Activated B cell treated with CpG ODN at 0.5 μM for 24 hours (primary cell): ENCODE measurements at regions of chr12 and their contacts with region 1.

Region 1: GRCh38 chr12:93467351-93468007 is at the start of gene MRPL42:
- DNase-seq: peak; percentile 93
- ATAC-seq: peak; percentile 92
- H3K4me3 Mint-ChIP-seq: peak within 1 kb of the TSS; percentile 95
- H3K27ac Mint-ChIP-seq: peak within 1 kb of the TSS; percentile 94
- H3K4me1 Mint-ChIP-seq: peaks cover 23% of the 10 kb centered on the region
- H3K27me3 Mint-ChIP-seq: no peaks in the 10 kb centered on the region
- CTCF ChIP-seq: no peak
- total RNA-seq, gene MRPL42: 40.9 and 44.6 TPM in 2 replicates

Region 2: DNA sequence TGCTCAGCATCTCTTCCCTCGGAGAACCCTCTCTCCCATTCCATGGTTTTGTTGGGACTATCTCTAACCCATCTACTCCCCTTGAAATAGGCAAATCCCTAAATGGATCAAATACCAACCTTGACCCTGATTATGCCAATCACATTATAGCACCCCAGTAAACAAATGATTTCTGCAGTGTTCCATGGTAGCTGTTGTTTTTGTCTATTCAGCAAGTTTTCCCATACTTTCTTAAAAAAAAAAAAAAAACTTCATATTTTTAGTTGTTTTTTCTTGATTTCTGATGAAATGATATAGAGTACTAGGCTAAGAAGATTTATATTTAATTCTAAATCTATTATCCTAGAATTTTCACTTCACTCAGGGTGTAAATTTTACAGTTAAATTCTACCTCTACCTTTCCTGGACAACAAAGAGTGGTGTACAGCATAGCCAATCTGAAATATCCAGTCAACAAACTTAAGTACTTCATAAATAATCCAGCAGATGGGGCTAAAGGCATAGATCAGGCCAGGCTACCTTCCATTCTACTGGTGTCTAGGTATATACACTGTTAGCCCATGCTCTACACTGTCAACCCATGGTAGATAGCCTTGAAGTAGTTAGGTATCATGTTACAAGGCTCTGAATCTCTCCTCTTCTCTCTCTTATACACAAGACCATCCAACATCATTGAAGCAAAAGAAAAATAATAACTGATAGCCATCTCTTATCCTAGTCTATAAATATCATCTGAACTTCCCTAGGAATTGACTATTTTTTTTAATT is 682.5 kb before region 1 on chr12:
- CTCF ChIA-PET with region 1: no interaction called
- POLR2A ChIA-PET with region 1: no interaction called
- intact Hi-C with region 1: loop called (anchors 1 kb)
- DNase-seq: no peak
- ATAC-seq: peak; percentile 98
- H3K4me3 Mint-ChIP-seq: no peak overlapping the region
- H3K27ac Mint-ChIP-seq: no peak overlapping the region
- H3K4me1 Mint-ChIP-seq: no peaks in the 10 kb centered on the region
- H3K27me3 Mint-ChIP-seq: no peaks in the 10 kb centered on the region
- CTCF ChIP-seq: no peak

Region 3: DNA sequence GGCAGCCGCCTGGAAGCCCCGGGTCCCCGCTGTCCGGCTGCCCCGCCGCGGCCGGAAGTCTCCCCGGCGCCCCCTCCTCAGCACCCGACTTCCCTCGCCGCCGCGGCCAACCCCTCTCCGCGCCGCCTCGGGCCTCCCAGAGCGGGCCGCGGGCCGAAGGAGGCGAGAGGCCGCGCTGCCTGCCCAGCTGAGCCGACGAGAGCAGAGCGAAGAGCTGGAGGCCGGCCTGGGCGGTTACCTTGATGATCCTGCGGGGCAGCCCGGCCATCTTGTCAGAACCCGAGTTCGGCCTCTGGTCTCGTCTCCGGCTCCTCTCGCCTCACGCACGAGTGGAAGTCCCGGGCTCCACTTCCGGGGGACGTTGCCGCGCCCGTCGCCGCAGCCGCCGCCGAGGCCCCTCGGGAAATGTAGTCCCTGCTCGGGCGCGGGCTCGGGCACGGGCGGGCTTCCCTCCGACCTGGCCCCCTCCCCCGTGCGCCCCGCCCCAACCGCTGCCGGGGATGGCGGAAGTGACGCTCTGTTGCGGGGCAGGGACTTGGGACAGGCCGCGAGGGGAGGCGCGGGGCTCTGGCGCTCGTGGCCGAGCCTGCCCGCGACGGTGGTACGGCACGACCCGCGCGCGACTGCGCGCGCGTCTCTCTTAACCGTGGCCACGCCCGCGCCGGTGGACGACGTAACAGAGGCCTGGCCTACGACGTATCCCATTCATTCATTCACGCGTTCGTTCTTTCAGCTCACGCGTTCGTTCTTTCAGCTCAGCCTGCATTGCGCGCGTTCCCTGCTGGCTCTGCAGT is 25.7 kb before region 1 on chr12 and contains the start of gene UBE2N:
- CTCF ChIA-PET with region 1: interaction called, 4 read pairs
- POLR2A ChIA-PET with region 1: interaction called, 32 read pairs
- intact Hi-C with region 1: loop called (anchors 1 kb)
- DNase-seq: peak; percentile 99
- ATAC-seq: peak; percentile 84
- H3K4me3 Mint-ChIP-seq: peak within 1 kb of the TSS; percentile 96
- H3K27ac Mint-ChIP-seq: peak within 1 kb of the TSS; percentile 96
- H3K4me1 Mint-ChIP-seq: peaks cover 56% of the 10 kb centered on the region
- H3K27me3 Mint-ChIP-seq: no peaks in the 10 kb centered on the region
- CTCF ChIP-seq: no peak
- total RNA-seq, gene UBE2N: 152 and 163 TPM in 2 replicates

Region 4: GRCh38 chr12:93449277-93449676 is 18.2 kb before region 1 on chr12:
- CTCF ChIA-PET with region 1: no interaction called
- POLR2A ChIA-PET with region 1: interaction called, 4 read pairs
- intact Hi-C with region 1: loop called (anchors 1 kb)
- DNase-seq: no peak
- ATAC-seq: peak; percentile 99
- H3K4me3 Mint-ChIP-seq: no peak overlapping the region
- H3K27ac Mint-ChIP-seq: peak overlapping the region; percentile 54
- H3K4me1 Mint-ChIP-seq: peaks cover 19% of the 10 kb centered on the region
- H3K27me3 Mint-ChIP-seq: no peaks in the 10 kb centered on the region
- CTCF ChIP-seq: no peak

Region 5: DNA sequence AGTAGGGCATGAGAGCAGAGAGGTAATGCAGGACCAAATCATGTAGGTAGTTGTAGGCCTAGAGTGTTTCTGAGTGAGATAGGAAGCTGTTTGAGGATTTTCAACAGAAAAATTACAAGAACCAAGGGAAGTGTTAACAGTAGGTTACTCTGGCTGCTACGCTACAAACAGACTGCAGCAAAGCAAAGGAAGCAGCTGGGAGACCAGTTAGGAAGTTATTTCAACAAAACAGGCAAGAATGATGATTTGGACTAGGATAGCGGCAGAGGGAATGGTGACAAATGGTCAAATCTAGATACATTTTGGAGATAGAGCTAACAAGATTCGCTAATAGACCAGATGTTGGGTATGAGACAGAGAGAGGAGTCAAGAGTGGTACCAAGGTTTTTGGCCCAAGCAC is 26.6 kb after region 1 on chr12:
- CTCF ChIA-PET with region 1: no interaction called
- POLR2A ChIA-PET with region 1: no interaction called
- intact Hi-C with region 1: no loop called
- DNase-seq: no peak
- ATAC-seq: no peak
- H3K4me3 Mint-ChIP-seq: no peak overlapping the region
- H3K27ac Mint-ChIP-seq: no peak overlapping the region
- H3K4me1 Mint-ChIP-seq: no peaks in the 10 kb centered on the region
- H3K27me3 Mint-ChIP-seq: no peaks in the 10 kb centered on the region
- CTCF ChIP-seq: no peak

Region 6: DNA sequence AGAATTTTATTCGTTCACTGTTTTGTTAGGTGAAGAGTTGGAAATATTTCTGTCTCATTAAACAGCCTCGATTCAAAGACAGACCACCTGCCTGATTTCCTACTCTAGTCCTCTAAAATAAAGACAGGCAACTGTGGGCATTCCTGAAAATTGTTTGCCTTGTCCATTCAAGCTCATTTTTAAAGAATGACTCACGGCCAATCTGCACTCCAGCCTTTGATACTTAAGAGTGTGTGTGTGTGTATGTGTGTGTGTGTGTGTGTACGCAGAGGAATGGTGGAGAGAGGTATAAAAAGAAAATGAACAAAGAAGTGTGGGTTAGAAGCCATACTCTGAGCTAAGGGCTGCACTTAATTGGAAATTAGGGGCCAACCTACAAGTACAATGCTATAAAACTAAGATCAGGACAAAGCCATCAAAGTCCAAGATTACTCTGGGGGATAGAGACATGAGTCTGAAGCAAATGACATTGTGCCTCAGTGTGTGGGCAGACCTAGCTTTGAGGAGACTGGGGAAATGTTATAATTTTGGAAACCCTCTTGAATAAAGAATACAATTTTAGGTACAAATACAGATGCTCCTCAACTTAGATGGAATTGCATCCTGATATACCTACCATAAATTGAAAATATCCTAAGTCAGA is 59.4 kb after region 1 on chr12:
- CTCF ChIA-PET with region 1: no interaction called
- POLR2A ChIA-PET with region 1: no interaction called
- intact Hi-C with region 1: no loop called
- DNase-seq: no peak
- ATAC-seq: no peak
- H3K4me3 Mint-ChIP-seq: no peak overlapping the region
- H3K27ac Mint-ChIP-seq: no peak overlapping the region
- H3K4me1 Mint-ChIP-seq: peaks cover 2% of the 10 kb centered on the region
- H3K27me3 Mint-ChIP-seq: peaks cover 18% of the 10 kb centered on the region
- CTCF ChIP-seq: no peak